Naive thymus-derived CD4-positive, alpha-beta T cell (primary cell): ENCODE measurements at regions of chr3 and their contacts with region 1.

Region 1: GRCh38 chr3:114152519-114153151 is 26.2 kb downstream of the DRD3 start:
- DNase-seq: peak; percentile 61 to 83 (median 78)
- ATAC-seq: peak; percentile 97
- H3K4me3 ChIP-seq: peak overlapping the region; percentile 55
- H3K4me3 Mint-ChIP-seq: peak overlapping the region; percentile 37 to 73 (median 62)
- H3K27ac ChIP-seq: no peak overlapping the region
- H3K27ac Mint-ChIP-seq: peak overlapping the region in 2 of 9 donors; percentile 14 to 40
- H3K4me1 ChIP-seq: peaks cover 8 to 9% of the 10 kb centered on the region in 2 donors
- H3K4me1 Mint-ChIP-seq: peaks cover 0 to 12% (median 0%) of the 10 kb centered on the region in 7 donors
- H3K27me3 ChIP-seq: no peaks in the 10 kb centered on the region
- H3K27me3 Mint-ChIP-seq: no peaks in the 10 kb centered on the region

Region 2: DNA sequence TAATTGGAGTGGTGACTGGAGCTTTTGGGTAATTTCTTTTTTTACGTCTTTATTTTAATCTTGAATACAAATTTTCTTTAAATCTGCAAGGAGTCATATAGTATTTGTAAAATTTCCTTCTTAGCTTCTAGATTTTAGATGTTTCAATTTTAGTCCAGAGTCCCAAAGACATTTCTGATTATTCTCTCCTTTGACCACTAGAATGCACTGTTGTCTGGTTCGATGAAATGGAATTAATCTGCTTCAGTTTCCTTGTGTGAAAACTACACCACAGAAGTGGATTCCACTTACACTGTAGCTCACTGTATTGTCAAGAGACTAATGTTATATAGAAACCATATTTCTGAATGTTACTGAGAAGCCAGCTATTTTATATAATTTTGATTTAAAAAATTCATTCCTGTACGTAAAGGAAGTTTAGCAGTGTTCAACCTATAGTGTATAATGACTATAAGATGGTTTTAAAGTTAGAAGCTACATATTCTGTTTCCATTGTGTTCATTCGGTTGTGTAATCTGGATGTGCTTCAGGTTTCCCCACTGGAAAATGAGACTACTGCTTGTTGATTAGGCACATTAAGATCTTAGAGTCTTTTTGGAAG is 307.9 kb before region 1 on chr3:
- CTCF ChIA-PET with region 1: no interaction called
- POLR2A ChIA-PET with region 1: no interaction called
- intact Hi-C with region 1: loop called in 1 of 2 experiments (anchors 10 kb)
- DNase-seq: peak in 5 of 9 donors; percentile 7 to 25 (median 11)
- ATAC-seq: peak; percentile 60
- H3K4me3 ChIP-seq: no peak overlapping the region
- H3K4me3 Mint-ChIP-seq: no peak overlapping the region
- H3K27ac ChIP-seq: no peak overlapping the region
- H3K27ac Mint-ChIP-seq: no peak overlapping the region
- H3K4me1 ChIP-seq: no peaks in the 10 kb centered on the region
- H3K4me1 Mint-ChIP-seq: no peaks in the 10 kb centered on the region
- H3K27me3 ChIP-seq: no peaks in the 10 kb centered on the region
- H3K27me3 Mint-ChIP-seq: no peaks in the 10 kb centered on the region

Region 3: DNA sequence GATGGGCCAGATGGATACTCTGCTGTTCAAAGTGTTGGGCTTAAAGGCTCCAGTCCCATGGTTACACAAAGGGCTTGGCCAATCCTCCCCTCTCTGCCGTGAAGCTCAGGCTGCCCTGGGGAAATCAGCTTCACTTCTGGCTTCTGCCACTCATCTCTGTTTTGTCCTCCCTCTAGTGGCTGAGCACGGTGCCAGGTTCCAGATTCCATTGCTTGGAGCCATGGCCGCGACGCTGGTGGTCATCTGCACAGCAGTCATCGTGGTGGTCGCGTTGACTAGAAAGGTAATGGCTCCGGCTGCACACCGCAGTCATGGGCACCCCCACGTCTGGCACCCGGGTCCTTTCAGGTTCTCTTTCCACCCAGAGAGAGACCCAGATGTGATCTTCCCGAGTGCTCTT is 146.8 kb after region 1 on chr3:
- CTCF ChIA-PET with region 1: interaction called, 6 read pairs
- POLR2A ChIA-PET with region 1: no interaction called
- intact Hi-C with region 1: loop called (anchors 1 to 2 kb)
- DNase-seq: peak in 5 of 9 donors; percentile 18 to 34 (median 26)
- ATAC-seq: peak; percentile 65
- H3K4me3 ChIP-seq: no peak overlapping the region
- H3K4me3 Mint-ChIP-seq: peak overlapping the region in 2 of 10 donors; percentile 19 to 56
- H3K27ac ChIP-seq: no peak overlapping the region
- H3K27ac Mint-ChIP-seq: peak overlapping the region in 1 of 9 donors; percentile 17
- H3K4me1 ChIP-seq: peaks cover 0 to 11% of the 10 kb centered on the region in 2 donors
- H3K4me1 Mint-ChIP-seq: peaks cover 0 to 21% (median 4%) of the 10 kb centered on the region in 7 donors
- H3K27me3 ChIP-seq: no peaks in the 10 kb centered on the region
- H3K27me3 Mint-ChIP-seq: no peaks in the 10 kb centered on the region

Region 4: GRCh38 chr3:114362815-114363214 is 210.2 kb after region 1 on chr3:
- CTCF ChIA-PET with region 1: no interaction called
- POLR2A ChIA-PET with region 1: no interaction called
- intact Hi-C with region 1: loop called in 1 of 2 experiments (anchors 5 kb)
- DNase-seq: no peak
- ATAC-seq: no peak
- H3K4me3 ChIP-seq: no peak overlapping the region
- H3K4me3 Mint-ChIP-seq: no peak overlapping the region
- H3K27ac ChIP-seq: no peak overlapping the region
- H3K27ac Mint-ChIP-seq: no peak overlapping the region
- H3K4me1 ChIP-seq: no peaks in the 10 kb centered on the region
- H3K4me1 Mint-ChIP-seq: no peaks in the 10 kb centered on the region
- H3K27me3 ChIP-seq: no peaks in the 10 kb centered on the region
- H3K27me3 Mint-ChIP-seq: no peaks in the 10 kb centered on the region

Region 5: GRCh38 chr3:114418724-114419543 is 266.3 kb after region 1 on chr3:
- CTCF ChIA-PET with region 1: interaction called, 35 read pairs
- POLR2A ChIA-PET with region 1: interaction called, 3 read pairs
- intact Hi-C with region 1: loop called (anchors 1 kb)
- DNase-seq: peak in 7 of 9 donors; percentile 40 to 66 (median 57)
- ATAC-seq: peak; percentile 91
- H3K4me3 ChIP-seq: no peak overlapping the region
- H3K4me3 Mint-ChIP-seq: no peak overlapping the region
- H3K27ac ChIP-seq: no peak overlapping the region
- H3K27ac Mint-ChIP-seq: peak overlapping the region in 2 of 9 donors; percentile 26 to 60
- H3K4me1 ChIP-seq: no peaks in the 10 kb centered on the region
- H3K4me1 Mint-ChIP-seq: peaks cover 4 to 18% (median 8%) of the 10 kb centered on the region in 7 donors
- H3K27me3 ChIP-seq: no peaks in the 10 kb centered on the region
- H3K27me3 Mint-ChIP-seq: peaks cover 0 to 2% (median 0%) of the 10 kb centered on the region in 5 donors